Activated naive CD4-positive, alpha-beta T cell treated with anti-CD3 and anti-CD28 coated beads for 36 hours (primary cell): ENCODE measurements at regions of chr2 and their contacts with region 1.

Region 1: DNA sequence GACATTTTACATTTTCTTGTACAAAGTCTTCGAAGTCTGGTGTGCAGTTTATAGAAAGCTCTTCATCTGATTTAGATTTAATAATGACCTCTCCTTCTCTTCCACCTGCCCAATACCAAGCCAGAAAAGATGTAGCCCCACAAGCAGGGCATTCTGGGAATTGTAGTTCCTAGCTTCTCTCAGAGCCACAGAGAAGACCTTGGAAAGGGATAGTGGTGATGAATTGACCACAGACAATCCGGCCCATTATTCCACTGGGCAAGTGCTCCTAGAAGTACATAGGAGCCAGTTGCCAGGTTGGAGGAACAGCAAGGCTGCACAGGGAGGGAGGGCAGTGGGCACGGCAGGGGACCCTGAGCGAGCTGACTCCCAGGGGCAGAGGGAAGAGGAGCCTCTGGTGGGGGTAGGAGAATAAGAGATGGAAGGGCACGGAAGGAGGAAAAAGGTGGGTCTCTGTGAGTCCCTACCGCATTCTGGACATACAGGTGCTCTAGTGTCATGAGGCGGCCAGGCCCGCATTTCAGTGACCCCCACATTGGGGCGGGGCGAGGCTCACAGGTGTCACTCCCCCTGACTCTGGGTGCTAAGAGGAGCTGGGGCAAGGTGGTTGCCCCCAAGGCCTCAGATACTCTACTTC is 152.5 kb upstream of the HAAO start:
- DNase-seq: no peak
- H3K4me3 Mint-ChIP-seq: no peak overlapping the region
- H3K27ac Mint-ChIP-seq: no peak overlapping the region
- H3K4me1 Mint-ChIP-seq: peaks cover 2% of the 10 kb centered on the region
- H3K27me3 Mint-ChIP-seq: no peaks in the 10 kb centered on the region

Region 2: GRCh38 chr2:42859006-42859552 is 85.8 kb before region 1 on chr2:
- CTCF ChIA-PET with region 1: interaction called, 15 read pairs
- intact Hi-C with region 1: loop called (anchors 2 kb)
- DNase-seq: peak; percentile 91
- H3K4me3 Mint-ChIP-seq: no peak overlapping the region
- H3K27ac Mint-ChIP-seq: no peak overlapping the region
- H3K4me1 Mint-ChIP-seq: peaks cover 12% of the 10 kb centered on the region
- H3K27me3 Mint-ChIP-seq: no peaks in the 10 kb centered on the region

Region 3: GRCh38 chr2:43024515-43025011 is 79.7 kb after region 1 on chr2:
- CTCF ChIA-PET with region 1: no interaction called
- intact Hi-C with region 1: loop called (anchors 5 kb)
- DNase-seq: peak; percentile 58
- H3K4me3 Mint-ChIP-seq: no peak overlapping the region
- H3K27ac Mint-ChIP-seq: no peak overlapping the region
- H3K4me1 Mint-ChIP-seq: peaks cover 8% of the 10 kb centered on the region
- H3K27me3 Mint-ChIP-seq: no peaks in the 10 kb centered on the region

Region 4: DNA sequence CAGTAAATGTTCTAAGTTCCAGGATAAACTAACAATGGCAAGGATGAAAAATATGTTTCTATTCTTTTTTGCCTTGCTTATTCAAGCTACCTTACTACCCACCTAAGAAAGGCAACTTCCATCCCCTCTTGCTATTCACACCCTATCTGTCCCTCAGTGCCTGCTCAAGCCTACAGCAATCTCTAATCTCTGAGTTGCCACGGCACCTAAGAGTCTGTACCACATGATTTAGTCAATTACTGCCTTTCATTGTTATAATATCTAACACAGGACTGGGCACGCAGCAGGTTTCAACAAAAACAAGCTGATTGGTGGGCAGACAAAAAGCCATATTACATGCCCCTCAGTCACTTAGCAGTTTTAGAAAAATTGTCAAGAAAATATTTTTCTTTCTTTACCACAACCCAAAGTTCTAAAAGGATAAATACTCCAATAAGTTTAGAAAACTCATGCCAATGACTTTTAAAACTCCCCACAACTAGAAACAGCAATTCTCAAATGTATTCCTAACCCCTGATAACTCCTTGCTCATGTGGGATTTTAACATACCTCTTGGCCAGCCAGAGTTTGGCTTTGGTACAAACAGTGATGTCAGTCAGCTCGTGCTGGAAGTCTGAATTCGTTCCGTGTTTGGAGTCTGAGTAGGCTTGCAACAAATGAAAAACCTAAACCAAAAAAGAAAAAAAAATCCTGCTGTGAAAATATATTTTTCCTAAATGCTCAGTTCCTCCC is 398.8 kb after region 1 on chr2:
- CTCF ChIA-PET with region 1: no interaction called
- intact Hi-C with region 1: no loop called
- DNase-seq: no peak
- H3K4me3 Mint-ChIP-seq: no peak overlapping the region
- H3K27ac Mint-ChIP-seq: no peak overlapping the region
- H3K4me1 Mint-ChIP-seq: no peaks in the 10 kb centered on the region
- H3K27me3 Mint-ChIP-seq: no peaks in the 10 kb centered on the region